Lower leg skin (tissue), 4 donors: ENCODE measurements at regions of chr6 and their contacts with region 1.

Region 1: DNA sequence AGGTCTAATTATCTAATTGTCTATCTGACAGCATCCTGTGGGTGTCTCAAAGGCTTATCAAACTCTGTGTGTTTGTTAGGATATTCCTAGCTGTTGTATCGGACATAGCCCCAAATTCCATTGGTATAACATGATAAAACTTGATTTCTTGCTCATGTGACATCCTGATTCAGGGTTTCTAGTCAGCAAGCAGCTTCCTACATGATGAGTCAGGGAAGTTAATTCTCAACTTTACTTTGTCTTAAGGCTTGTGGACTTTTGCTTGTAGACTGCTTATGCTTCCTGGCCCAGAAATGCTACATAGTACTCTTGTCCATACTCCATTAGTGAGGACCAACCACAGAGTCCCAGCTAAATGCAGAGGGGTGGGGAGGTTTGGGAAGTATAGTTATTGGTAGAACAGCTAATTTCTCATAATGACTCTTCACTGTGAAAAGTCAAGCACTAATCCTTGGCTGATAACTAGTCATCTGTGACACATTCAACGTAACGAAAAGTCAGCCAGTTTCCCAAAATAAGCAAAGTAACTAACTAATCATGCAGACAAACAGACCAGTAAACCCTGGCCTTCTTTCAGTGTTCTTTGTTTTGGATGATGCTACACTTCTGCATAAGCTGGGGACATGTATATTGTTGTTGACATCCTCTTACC is 25.8 kb downstream of the NKAIN2 start:
- DNase-seq: no peak
- H3K4me3 ChIP-seq: no peak overlapping the region
- CTCF ChIP-seq: no peak
- POLR2A ChIP-seq: no peak

Region 2: DNA sequence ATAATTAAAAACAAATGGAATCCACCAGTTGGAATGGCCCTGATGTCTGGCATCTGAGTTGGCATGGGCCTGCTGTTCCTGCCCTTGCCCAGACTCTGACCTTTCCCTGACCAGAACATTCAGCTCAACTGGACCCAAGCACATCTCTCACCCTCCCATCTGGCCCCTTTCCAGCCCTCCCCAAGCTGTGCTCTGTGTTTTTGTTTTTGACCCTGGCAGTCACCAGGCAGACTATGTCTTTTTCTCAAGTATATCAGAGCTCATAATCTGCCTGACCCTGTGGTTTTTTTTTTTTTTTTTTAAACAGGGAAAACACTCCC is 310.3 kb before region 1 on chr6:
- intact Hi-C with region 1: no loop called
- DNase-seq: no peak
- H3K4me3 ChIP-seq: no peak overlapping the region
- CTCF ChIP-seq: no peak
- POLR2A ChIP-seq: no peak

Region 3: GRCh38 chr6:123619156-123619555 is 210.3 kb before region 1 on chr6:
- intact Hi-C with region 1: no loop called
- DNase-seq: no peak
- H3K4me3 ChIP-seq: no peak overlapping the region
- CTCF ChIP-seq: no peak
- POLR2A ChIP-seq: no peak

Region 4: GRCh38 chr6:125354649-125355048 is 1525.2 kb after region 1 on chr6:
- intact Hi-C with region 1: loop called (anchors 5 kb)
- DNase-seq: no peak
- H3K4me3 ChIP-seq: no peak overlapping the region
- CTCF ChIP-seq: no peak
- POLR2A ChIP-seq: no peak